PC-9 (cell line): ENCODE measurements at regions of chr17 and their contacts with region 1.

Region 1: GRCh38 chr17:75131280-75132017 is at the start of gene NT5C:
- DNase-seq: peak; percentile 62 to 71
- H3K4me3 ChIP-seq: peak within 1 kb of the TSS; percentile 95
- H3K27ac ChIP-seq: peak within 1 kb of the TSS; percentile 72
- H3K4me1 ChIP-seq: peaks cover 20% of the 10 kb centered on the region
- H3K27me3 ChIP-seq: no peaks in the 10 kb centered on the region
- CTCF ChIP-seq: peak; percentile 65
- total RNA-seq, gene NT5C: 38.6 and 52.3 TPM in 2 replicates

Region 2: GRCh38 chr17:75069783-75070182 is 61.7 kb before region 1 on chr17:
- CTCF ChIA-PET with region 1: no interaction called
- POLR2A ChIA-PET with region 1: interaction called, 19 read pairs
- intact Hi-C with region 1: no loop called
- DNase-seq: no peak
- H3K4me3 ChIP-seq: no peak overlapping the region
- H3K27ac ChIP-seq: no peak overlapping the region
- H3K4me1 ChIP-seq: no peaks in the 10 kb centered on the region
- H3K27me3 ChIP-seq: no peaks in the 10 kb centered on the region
- CTCF ChIP-seq: peak; percentile 65